Activated CD4-positive, alpha-beta T cell treated with anti-CD3 and anti-CD28 coated beads, Interleukin-2, amount 10 ng/mL, durations not matched to agents 24 days and 14 days (primary cell): ENCODE measurements at regions of chr2 and their contacts with region 1.

Region 1: GRCh38 chr2:65056215-65057053 is at the start of gene CEP68:
- DNase-seq: peak; percentile 99
- H3K4me3 Mint-ChIP-seq: peak within 1 kb of the TSS; percentile 97
- H3K27ac Mint-ChIP-seq: peak within 1 kb of the TSS; percentile 87
- H3K4me1 Mint-ChIP-seq: peaks cover 50% of the 10 kb centered on the region
- H3K27me3 Mint-ChIP-seq: peaks cover 2% of the 10 kb centered on the region
- total RNA-seq, gene CEP68: 4.4 and 4.9 TPM in 2 replicates

Region 2: GRCh38 chr2:65227425-65228262 is 171.2 kb after region 1 on chr2 and contains the start of gene ACTR2:
- intact Hi-C with region 1: loop called (anchors 2 kb)
- DNase-seq: peak; percentile 99
- H3K4me3 Mint-ChIP-seq: peak within 1 kb of the TSS; percentile 97
- H3K27ac Mint-ChIP-seq: peak within 1 kb of the TSS; percentile 98
- H3K4me1 Mint-ChIP-seq: peaks cover 28% of the 10 kb centered on the region
- H3K27me3 Mint-ChIP-seq: peaks cover 1% of the 10 kb centered on the region
- total RNA-seq, gene ACTR2: 298 TPM in 2 replicates

Region 3: DNA sequence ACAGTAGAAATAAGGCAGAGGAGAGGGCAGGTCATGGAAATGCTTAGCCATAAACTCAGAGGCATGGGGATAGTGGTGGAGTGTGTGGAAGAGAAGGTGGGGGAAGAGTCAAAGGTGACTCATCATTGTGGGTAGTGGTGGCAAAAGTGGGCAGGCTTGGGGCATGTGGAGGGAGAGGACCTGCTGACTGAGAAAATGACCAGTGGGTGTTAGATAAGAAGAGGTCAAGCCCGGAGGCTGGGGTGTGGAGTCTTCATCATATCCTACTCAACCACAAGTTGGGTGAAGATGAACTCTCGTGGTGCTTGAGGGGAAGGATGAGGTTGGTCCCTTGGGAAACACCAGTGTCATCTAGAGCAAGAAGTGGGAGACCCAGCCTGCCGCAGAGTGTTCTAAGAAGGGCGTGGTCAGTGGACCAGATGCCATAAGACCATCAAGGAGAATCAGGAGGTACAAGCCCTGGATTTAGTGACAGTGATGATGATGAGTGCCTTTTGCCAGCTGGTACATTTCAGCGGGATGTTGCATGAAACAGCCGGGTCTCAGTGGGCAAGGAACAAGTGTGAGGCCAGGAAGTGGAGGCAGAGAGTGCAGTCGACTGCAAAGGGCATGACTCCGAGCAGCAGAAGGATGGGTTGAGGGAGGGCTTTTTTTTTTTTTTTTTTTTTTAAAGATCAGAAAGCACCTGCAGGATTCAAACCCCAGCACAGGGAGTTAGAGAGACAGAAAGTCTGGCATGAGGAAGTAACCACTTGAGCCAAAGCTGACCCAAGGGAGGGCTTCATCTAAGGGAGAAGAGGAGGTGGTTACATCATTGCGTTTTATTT is 498.5 kb after region 1 on chr2:
- intact Hi-C with region 1: loop called (anchors 5 kb)
- DNase-seq: no peak
- H3K4me3 Mint-ChIP-seq: no peak overlapping the region
- H3K27ac Mint-ChIP-seq: peak overlapping the region; percentile 57
- H3K4me1 Mint-ChIP-seq: peaks cover 16% of the 10 kb centered on the region
- H3K27me3 Mint-ChIP-seq: peaks cover 30% of the 10 kb centered on the region